Uterus (tissue), 4 donors: ENCODE measurements at regions of chr11 and their contacts with region 1.

Region 1: DNA sequence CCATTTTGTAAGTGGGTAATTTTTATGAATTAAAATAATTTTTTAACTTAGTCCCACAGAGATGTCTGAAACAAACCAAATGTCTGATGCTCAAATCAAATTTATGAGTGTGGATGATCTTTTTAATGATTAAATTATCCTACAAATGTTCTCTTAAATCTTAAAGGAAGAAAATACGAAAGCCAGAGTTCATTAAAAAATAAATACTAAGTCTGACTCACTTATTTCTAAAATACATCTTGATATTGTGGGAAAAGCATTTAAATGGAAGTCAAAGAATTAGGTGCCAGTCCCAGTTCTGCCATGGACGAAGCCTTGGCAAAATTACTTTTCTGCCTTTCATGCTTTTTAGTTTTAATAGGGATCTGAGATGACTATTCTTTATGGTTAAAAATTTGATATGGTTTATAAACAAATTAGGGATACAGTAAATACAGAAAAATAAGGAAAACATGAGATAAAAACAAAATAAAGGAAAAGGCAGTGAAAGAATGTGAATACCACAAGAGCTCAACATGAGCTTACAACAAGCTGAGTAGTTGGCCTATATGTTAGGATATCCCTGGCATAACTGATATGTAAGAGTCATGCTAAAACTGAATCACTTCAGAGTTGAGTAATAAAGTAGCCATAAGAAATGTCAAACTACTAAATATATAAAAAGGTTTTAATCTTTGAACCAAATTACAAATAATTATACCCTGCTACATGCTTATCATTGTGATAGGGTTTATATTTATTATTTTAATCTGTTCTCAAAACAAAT is 9.2 kb downstream of the CCDC34 start:
- DNase-seq: no peak
- H3K4me3 ChIP-seq: no peak overlapping the region
- H3K27ac ChIP-seq: no peak overlapping the region
- H3K4me1 ChIP-seq: no peaks in the 10 kb centered on the region
- H3K27me3 ChIP-seq: no peaks in the 10 kb centered on the region
- CTCF ChIP-seq: no peak
- POLR2A ChIP-seq: no peak

Region 2: GRCh38 chr11:27248576-27249509 is 104.9 kb before region 1 on chr11:
- intact Hi-C with region 1: no loop called
- DNase-seq: no peak
- H3K4me3 ChIP-seq: no peak overlapping the region
- H3K27ac ChIP-seq: peak overlapping the region in 1 of 2 donors; percentile 9
- H3K4me1 ChIP-seq: no peaks in the 10 kb centered on the region
- H3K27me3 ChIP-seq: no peaks in the 10 kb centered on the region
- CTCF ChIP-seq: no peak
- POLR2A ChIP-seq: no peak

Region 3: GRCh38 chr11:27472398-27473016 is 118.7 kb after region 1 on chr11 and contains the start of gene LGR4:
- intact Hi-C with region 1: loop called (anchors 10 kb)
- DNase-seq: peak; percentile 85 to 92
- H3K4me3 ChIP-seq: peak within 1 kb of the TSS; percentile 51 to 88
- H3K27ac ChIP-seq: peak within 1 kb of the TSS; percentile 86 to 95
- H3K4me1 ChIP-seq: peaks cover 0 to 6% of the 10 kb centered on the region in 2 donors
- H3K27me3 ChIP-seq: no peaks in the 10 kb centered on the region
- CTCF ChIP-seq: no peak
- POLR2A ChIP-seq: peak; percentile 61 to 82
- total RNA-seq, gene LGR4: 9.4 to 57.9 (median 16.1) TPM